ENCODE measurements at regions of chr21 and their contacts with region 1.

Region 1: DNA sequence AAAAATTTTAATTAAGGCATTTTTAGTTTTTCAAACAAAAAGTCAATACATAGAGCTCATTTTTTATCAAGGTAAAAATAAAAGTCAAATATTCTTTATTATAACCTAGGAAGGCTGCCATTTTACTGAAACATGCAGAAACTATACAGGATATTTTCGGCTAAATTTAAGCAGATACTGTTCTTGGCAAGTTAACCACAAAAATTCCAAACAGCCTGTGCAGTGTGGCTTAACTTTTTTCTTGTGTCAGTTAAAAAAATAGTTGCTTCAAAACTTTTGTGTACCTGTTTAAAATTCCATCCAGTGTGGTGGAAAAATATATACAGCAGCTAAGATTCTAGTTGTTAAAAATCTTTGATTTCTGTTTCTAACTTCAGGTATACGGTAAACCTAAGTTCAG is 135.0 kb downstream of the ATP5PO start:
- DNase-seq: no peak
- ATAC-seq: no peak
- H3K4me3 ChIP-seq: no peak overlapping the region
- H3K27ac ChIP-seq: no peak overlapping the region
- H3K4me1 ChIP-seq: no peaks in the 10 kb centered on the region
- H3K27me3 ChIP-seq: no peaks in the 10 kb centered on the region
- CTCF ChIP-seq: no peak
- EP300 ChIP-seq: no peak
- POLR2A ChIP-seq: no peak
- RAD21 ChIP-seq: no peak

Region 2: DNA sequence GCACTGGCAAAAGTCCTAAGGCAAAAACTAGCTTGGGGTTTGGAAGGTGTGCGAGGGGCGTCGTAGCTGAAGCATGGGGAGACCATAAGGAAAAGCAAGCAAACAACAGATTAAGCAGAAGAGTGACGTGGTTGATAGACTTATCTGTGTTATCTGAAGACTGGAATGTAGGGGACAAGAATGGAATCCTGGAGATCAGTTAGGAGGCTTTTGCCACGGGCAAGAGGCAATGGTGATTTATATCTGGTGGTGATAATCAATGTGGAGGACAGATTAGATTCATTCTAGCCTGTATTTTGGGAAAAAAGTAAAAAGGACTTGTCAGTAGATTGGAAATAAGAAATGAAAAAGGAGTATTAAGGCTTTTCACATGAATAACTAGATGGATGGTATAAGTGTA is 40.9 kb before region 1 on chr21:
- CTCF ChIA-PET with region 1: no interaction called
- POLR2A ChIA-PET with region 1: no interaction called
- in situ Hi-C with region 1: no loop called
- intact Hi-C with region 1: no loop called
- DNase-seq: no peak
- ATAC-seq: no peak
- H3K4me3 ChIP-seq: no peak overlapping the region
- H3K27ac ChIP-seq: no peak overlapping the region
- H3K4me1 ChIP-seq: peaks cover 10% of the 10 kb centered on the region
- H3K27me3 ChIP-seq: no peaks in the 10 kb centered on the region
- CTCF ChIP-seq: no peak
- EP300 ChIP-seq: no peak
- POLR2A ChIP-seq: no peak
- RAD21 ChIP-seq: no peak

Region 3: DNA sequence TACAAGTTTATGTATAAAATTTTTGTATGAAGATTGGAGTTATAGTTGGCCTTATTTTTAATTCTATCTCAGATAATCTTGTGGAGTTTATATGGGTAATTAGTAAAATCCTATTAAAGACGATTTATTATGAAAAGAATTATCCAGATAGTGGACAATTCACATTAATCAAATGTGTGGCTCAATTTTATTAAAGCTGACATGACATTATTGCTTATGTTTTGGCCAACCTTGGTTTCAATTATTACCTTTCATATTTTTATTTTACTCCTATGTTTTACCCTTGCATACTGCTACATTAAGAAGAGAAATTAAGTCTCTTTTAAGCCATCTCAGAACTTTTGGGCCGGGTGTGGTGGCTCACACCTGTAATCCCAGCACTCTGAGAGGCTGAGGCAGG is 28.4 kb before region 1 on chr21:
- CTCF ChIA-PET with region 1: no interaction called
- POLR2A ChIA-PET with region 1: no interaction called
- in situ Hi-C with region 1: no loop called
- intact Hi-C with region 1: loop called (anchors 1 kb)
- DNase-seq: no peak
- ATAC-seq: no peak
- H3K4me3 ChIP-seq: no peak overlapping the region
- H3K27ac ChIP-seq: no peak overlapping the region
- H3K4me1 ChIP-seq: no peaks in the 10 kb centered on the region
- H3K27me3 ChIP-seq: no peaks in the 10 kb centered on the region
- CTCF ChIP-seq: no peak
- EP300 ChIP-seq: no peak
- POLR2A ChIP-seq: no peak
- RAD21 ChIP-seq: no peak